ENCODE measurements at regions of chr12 and their contacts with region 1.

Region 1: DNA sequence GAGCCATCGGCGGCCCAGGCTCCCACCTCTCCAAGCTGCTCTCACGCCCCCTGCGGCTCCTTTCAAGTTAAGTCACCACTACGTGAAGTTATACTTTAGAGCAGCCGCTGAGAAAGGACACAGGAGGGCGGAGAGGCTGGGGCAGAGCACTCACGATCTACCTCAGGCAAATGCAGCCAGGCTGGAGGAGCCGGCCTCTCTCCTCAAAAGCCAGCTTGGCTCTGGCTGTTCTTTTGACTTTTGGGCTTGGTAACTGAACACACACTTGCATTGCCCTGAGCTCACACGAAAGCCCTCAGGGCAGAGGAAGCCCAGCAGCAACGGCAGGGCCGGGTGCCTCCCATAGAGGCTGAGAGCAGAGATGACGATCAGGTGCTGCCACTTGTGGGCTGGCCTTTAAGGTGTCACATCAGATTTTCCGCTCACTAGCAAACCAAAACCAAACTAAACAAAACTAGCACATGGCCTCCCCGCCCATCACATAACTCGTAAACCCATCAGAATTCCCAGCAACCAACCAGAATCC is 75.2 kb downstream of the PITPNM2 start:
- DNase-seq: peak; percentile 91
- ATAC-seq: peak; percentile 87
- H3K4me3 Mint-ChIP-seq: peak overlapping the region; percentile 64
- H3K27ac Mint-ChIP-seq: peak overlapping the region; percentile 90
- H3K4me1 Mint-ChIP-seq: peaks cover 39% of the 10 kb centered on the region
- H3K27me3 Mint-ChIP-seq: peaks cover 2% of the 10 kb centered on the region

Region 2: DNA sequence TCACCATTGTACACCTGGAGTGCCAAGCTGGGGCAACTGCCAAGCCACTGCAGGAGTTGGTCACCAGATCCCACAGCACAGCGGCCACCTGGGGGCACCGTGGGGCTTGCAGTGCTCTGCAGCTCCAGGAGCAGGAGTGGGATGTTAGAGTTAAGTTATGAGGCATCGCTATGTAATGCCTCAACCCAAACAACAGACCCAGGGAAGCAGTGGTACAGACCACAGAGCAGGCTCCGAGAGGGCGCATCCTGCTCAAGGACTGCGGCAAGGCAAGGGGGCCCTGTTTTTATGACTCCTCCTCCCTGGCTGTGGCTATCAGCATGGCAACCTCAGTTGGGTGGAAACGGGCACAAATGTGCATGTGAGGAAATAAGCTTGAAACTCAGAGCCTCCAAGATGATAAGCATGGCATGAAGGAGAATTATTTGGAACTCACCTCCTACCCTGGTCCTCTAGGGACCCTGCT is 32.1 kb before region 1 on chr12:
- CTCF ChIA-PET with region 1: interaction called, 31 read pairs
- DNase-seq: peak; percentile 89
- ATAC-seq: peak; percentile 91
- H3K4me3 Mint-ChIP-seq: no peak overlapping the region
- H3K27ac Mint-ChIP-seq: peak overlapping the region; percentile 54
- H3K4me1 Mint-ChIP-seq: peaks cover 14% of the 10 kb centered on the region
- H3K27me3 Mint-ChIP-seq: peaks cover 3% of the 10 kb centered on the region

Region 3: GRCh38 chr12:123062681-123063486 is 12.8 kb before region 1 on chr12:
- CTCF ChIA-PET with region 1: interaction called, 30 read pairs
- DNase-seq: no peak
- ATAC-seq: no peak
- H3K4me3 Mint-ChIP-seq: no peak overlapping the region
- H3K27ac Mint-ChIP-seq: no peak overlapping the region
- H3K4me1 Mint-ChIP-seq: peaks cover 14% of the 10 kb centered on the region
- H3K27me3 Mint-ChIP-seq: no peaks in the 10 kb centered on the region

Region 4: GRCh38 chr12:123102386-123103136 is 26.9 kb after region 1 on chr12:
- CTCF ChIA-PET with region 1: interaction called, 12 read pairs
- DNase-seq: no peak
- ATAC-seq: no peak
- H3K4me3 Mint-ChIP-seq: no peak overlapping the region
- H3K27ac Mint-ChIP-seq: no peak overlapping the region
- H3K4me1 Mint-ChIP-seq: peaks cover 25% of the 10 kb centered on the region
- H3K27me3 Mint-ChIP-seq: no peaks in the 10 kb centered on the region

Region 5: DNA sequence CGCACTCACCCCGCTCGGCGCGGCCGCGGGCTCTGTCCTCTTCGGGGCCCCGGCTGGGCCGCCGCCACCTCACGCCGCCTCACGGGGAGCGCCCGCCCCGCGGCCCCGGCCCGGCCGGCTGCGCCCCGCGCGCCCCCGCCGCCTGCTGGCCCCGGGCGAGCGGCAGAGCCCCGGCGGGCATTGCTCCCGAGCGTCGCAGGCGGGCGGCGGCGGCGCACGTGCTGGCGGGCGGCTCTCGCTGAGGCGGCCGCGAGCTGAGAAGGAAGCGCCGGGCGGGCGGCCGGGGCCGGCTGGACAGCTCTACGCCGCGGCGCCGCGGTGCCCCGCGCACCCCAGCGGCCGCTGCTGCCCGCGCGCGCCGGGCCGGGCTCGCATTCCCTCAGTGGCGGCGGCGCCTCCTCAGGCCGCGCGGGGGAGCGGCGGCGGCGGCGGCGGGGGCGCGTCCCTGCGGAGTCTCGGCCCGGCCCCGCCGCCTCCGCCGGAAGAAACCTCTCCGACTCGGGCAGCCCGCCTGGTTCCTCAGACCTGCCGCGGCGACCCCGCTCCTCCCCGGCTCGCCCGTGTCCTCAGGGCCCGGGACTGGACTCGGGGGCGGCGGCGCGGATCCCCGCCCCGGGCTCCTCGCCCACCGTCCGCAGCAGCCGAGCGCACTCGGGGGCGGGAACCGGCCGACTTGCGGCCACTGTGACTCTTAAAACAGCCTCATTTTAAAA is 75.2 kb after region 1 on chr12 and contains the start of gene PITPNM2:
- CTCF ChIA-PET with region 1: interaction called, 14 read pairs
- DNase-seq: peak; percentile 65
- ATAC-seq: peak; percentile 88
- H3K4me3 Mint-ChIP-seq: peak within 1 kb of the TSS; percentile 65
- H3K27ac Mint-ChIP-seq: peak within 1 kb of the TSS; percentile 40
- H3K4me1 Mint-ChIP-seq: peaks cover 14% of the 10 kb centered on the region
- H3K27me3 Mint-ChIP-seq: peaks cover 19% of the 10 kb centered on the region
- total RNA-seq, gene PITPNM2: 8.6 to 11.6 TPM

Region 6: GRCh38 chr12:123410041-123410412 is 334.3 kb after region 1 on chr12:
- CTCF ChIA-PET with region 1: no interaction called
- DNase-seq: no peak
- ATAC-seq: no peak
- H3K4me3 Mint-ChIP-seq: no peak overlapping the region
- H3K27ac Mint-ChIP-seq: peak overlapping the region; percentile 14
- H3K4me1 Mint-ChIP-seq: no peaks in the 10 kb centered on the region
- H3K27me3 Mint-ChIP-seq: no peaks in the 10 kb centered on the region

Measured in activated CD8-positive, alpha-beta memory T cell treated with anti-CD3 and anti-CD28 coated beads, Interleukin-2, amount 10 ng/mL, durations not matched to agents 7 days and 5 days (primary cell).